ENCODE measurements at regions of chr1 and their contacts with region 1.

Region 1: DNA sequence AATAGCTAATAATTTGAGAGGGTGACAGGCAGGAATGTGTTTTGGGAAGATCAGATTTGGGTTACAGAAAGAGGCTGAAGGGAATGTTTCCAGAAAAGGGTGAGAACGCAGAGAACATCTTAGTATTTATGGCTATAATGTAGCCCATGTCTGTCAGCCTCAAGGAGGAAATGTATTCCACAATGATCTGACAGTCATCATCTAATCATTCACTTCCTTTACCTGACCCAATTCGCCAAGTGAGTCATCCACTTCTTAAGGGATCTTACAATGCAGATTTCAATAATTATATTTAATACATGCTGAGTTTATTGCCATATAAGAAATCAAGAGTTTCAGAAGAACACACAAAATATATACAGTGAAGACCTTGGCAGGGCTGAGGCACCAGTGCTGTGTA is 10.8 kb downstream of the TRIM45 start:
- DNase-seq: peak; percentile 11
- H3K4me3 ChIP-seq: no peak overlapping the region
- H3K27ac ChIP-seq: no peak overlapping the region
- H3K4me1 ChIP-seq: no peaks in the 10 kb centered on the region
- H3K27me3 ChIP-seq: no peaks in the 10 kb centered on the region
- CTCF ChIP-seq: no peak

Region 2: GRCh38 chr1:117128323-117129079 is 17.7 kb after region 1 on chr1:
- CTCF ChIA-PET with region 1: interaction called, 3 read pairs
- POLR2A ChIA-PET with region 1: interaction called, 10 read pairs
- intact Hi-C with region 1: no loop called
- DNase-seq: peak; percentile 61
- H3K4me3 ChIP-seq: no peak overlapping the region
- H3K27ac ChIP-seq: no peak overlapping the region
- H3K4me1 ChIP-seq: no peaks in the 10 kb centered on the region
- H3K27me3 ChIP-seq: peaks cover 8% of the 10 kb centered on the region
- CTCF ChIP-seq: peak; percentile 68

Measured in A673 (cell line).